Activated B cell treated with CpG ODN at 0.5 μM for 24 hours (primary cell): ENCODE measurements at regions of chr19 and their contacts with region 1.

Region 1: GRCh38 chr19:35740423-35741202 is 1.6 kb downstream of the IGFLR1 start:
- DNase-seq: peak; percentile 89
- ATAC-seq: peak; percentile 65
- H3K4me3 Mint-ChIP-seq: peak overlapping the region; percentile 95
- H3K27ac Mint-ChIP-seq: peak overlapping the region; percentile 95
- H3K4me1 Mint-ChIP-seq: peaks cover 66% of the 10 kb centered on the region
- H3K27me3 Mint-ChIP-seq: no peaks in the 10 kb centered on the region
- CTCF ChIP-seq: no peak

Region 2: GRCh38 chr19:35648017-35648961 is 92.3 kb before region 1 on chr19 and contains the start of gene COX6B1:
- CTCF ChIA-PET with region 1: no interaction called
- POLR2A ChIA-PET with region 1: interaction called, 9 read pairs
- intact Hi-C with region 1: loop called (anchors 1 kb)
- DNase-seq: peak; percentile 72
- ATAC-seq: peak; percentile 66
- H3K4me3 Mint-ChIP-seq: peak within 1 kb of the TSS; percentile 96
- H3K27ac Mint-ChIP-seq: peak within 1 kb of the TSS; percentile 87
- H3K4me1 Mint-ChIP-seq: peaks cover 37% of the 10 kb centered on the region
- H3K27me3 Mint-ChIP-seq: no peaks in the 10 kb centered on the region
- CTCF ChIP-seq: no peak
- total RNA-seq, gene COX6B1: 334 and 401 TPM in 2 replicates

Region 3: DNA sequence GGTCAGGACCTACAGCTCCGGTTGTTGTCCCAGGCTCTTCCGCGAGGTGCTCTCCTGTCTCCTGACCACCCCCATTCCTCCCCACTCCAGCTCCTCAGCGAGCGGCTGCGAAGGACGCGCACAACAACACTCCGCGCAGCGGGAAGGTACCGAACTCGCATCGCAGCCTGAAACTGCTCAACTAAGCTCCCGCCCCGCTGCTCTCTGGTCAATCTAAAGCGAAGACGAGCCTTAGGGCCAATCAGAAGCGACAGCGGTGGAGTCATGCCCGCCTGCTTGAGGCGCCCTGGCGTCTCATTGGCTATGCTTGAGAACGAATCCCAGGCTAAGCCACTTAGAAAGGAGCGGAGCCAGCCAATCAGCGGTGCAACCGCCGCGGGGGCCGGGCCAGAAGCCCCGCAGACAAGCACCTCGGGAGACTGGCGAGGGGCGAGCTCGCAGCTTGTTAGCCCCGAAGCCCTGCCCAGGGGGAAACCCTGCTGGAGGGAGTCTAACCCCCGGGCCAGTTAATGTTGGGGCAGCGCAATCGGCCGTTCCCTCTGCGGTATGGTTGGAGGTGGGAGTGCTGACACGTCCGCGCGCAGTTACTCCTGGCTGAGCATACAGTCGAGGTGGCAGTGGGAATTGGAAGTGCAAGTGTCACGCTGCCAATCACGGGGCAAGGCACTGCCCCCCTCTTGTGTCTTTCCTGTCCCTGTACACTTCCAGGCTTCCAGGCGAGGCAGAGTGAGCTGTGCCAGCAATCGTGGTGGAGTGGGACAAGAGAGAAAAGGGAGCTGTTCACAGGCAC is 38.2 kb before region 1 on chr19:
- CTCF ChIA-PET with region 1: no interaction called
- POLR2A ChIA-PET with region 1: interaction called, 16 read pairs
- intact Hi-C with region 1: loop called (anchors 1 kb)
- DNase-seq: peak; percentile 82
- ATAC-seq: peak; percentile 99
- H3K4me3 Mint-ChIP-seq: peak overlapping the region; percentile 98
- H3K27ac Mint-ChIP-seq: peak overlapping the region; percentile 96
- H3K4me1 Mint-ChIP-seq: peaks cover 7% of the 10 kb centered on the region
- H3K27me3 Mint-ChIP-seq: no peaks in the 10 kb centered on the region
- CTCF ChIP-seq: no peak

Region 4: GRCh38 chr19:35775298-35776110 is 34.9 kb after region 1 on chr19 and contains the start of gene ARHGAP33:
- CTCF ChIA-PET with region 1: no interaction called
- POLR2A ChIA-PET with region 1: interaction called, 7 read pairs
- intact Hi-C with region 1: loop called (anchors 1 kb)
- DNase-seq: peak; percentile 97
- ATAC-seq: peak; percentile 99
- H3K4me3 Mint-ChIP-seq: peak within 1 kb of the TSS; percentile 79
- H3K27ac Mint-ChIP-seq: no peak within 1 kb of the TSS
- H3K4me1 Mint-ChIP-seq: peaks cover 9% of the 10 kb centered on the region
- H3K27me3 Mint-ChIP-seq: no peaks in the 10 kb centered on the region
- CTCF ChIP-seq: no peak
- total RNA-seq, gene ARHGAP33: 9.3 and 15.0 TPM in 2 replicates

Region 5: GRCh38 chr19:35790981-35791813 is 50.6 kb after region 1 on chr19:
- CTCF ChIA-PET with region 1: no interaction called
- POLR2A ChIA-PET with region 1: no interaction called
- intact Hi-C with region 1: no loop called
- DNase-seq: no peak
- ATAC-seq: no peak
- H3K4me3 Mint-ChIP-seq: no peak overlapping the region
- H3K27ac Mint-ChIP-seq: no peak overlapping the region
- H3K4me1 Mint-ChIP-seq: no peaks in the 10 kb centered on the region
- H3K27me3 Mint-ChIP-seq: peaks cover 7% of the 10 kb centered on the region
- CTCF ChIP-seq: no peak

Region 6: GRCh38 chr19:35856546-35857149 is 116.0 kb after region 1 on chr19 and contains the start of gene KIRREL2:
- CTCF ChIA-PET with region 1: no interaction called
- POLR2A ChIA-PET with region 1: no interaction called
- intact Hi-C with region 1: no loop called
- DNase-seq: peak; percentile 38
- ATAC-seq: peak; percentile 28
- H3K4me3 Mint-ChIP-seq: peak within 1 kb of the TSS; percentile 78
- H3K27ac Mint-ChIP-seq: no peak within 1 kb of the TSS
- H3K4me1 Mint-ChIP-seq: peaks cover 14% of the 10 kb centered on the region
- H3K27me3 Mint-ChIP-seq: peaks cover 54% of the 10 kb centered on the region
- CTCF ChIP-seq: no peak
- total RNA-seq, gene KIRREL2: not detected in 2 replicates

Region 7: GRCh38 chr19:37309834-37310575 is 1569.4 kb after region 1 on chr19:
- CTCF ChIA-PET with region 1: no interaction called
- POLR2A ChIA-PET with region 1: no interaction called
- intact Hi-C with region 1: loop called (anchors 10 kb)
- DNase-seq: no peak
- ATAC-seq: no peak
- H3K4me3 Mint-ChIP-seq: no peak overlapping the region
- H3K27ac Mint-ChIP-seq: no peak overlapping the region
- H3K4me1 Mint-ChIP-seq: peaks cover 17% of the 10 kb centered on the region
- H3K27me3 Mint-ChIP-seq: peaks cover 12% of the 10 kb centered on the region
- CTCF ChIP-seq: no peak